ENCODE measurements at regions of chr1 and their contacts with region 1.

Region 1: DNA sequence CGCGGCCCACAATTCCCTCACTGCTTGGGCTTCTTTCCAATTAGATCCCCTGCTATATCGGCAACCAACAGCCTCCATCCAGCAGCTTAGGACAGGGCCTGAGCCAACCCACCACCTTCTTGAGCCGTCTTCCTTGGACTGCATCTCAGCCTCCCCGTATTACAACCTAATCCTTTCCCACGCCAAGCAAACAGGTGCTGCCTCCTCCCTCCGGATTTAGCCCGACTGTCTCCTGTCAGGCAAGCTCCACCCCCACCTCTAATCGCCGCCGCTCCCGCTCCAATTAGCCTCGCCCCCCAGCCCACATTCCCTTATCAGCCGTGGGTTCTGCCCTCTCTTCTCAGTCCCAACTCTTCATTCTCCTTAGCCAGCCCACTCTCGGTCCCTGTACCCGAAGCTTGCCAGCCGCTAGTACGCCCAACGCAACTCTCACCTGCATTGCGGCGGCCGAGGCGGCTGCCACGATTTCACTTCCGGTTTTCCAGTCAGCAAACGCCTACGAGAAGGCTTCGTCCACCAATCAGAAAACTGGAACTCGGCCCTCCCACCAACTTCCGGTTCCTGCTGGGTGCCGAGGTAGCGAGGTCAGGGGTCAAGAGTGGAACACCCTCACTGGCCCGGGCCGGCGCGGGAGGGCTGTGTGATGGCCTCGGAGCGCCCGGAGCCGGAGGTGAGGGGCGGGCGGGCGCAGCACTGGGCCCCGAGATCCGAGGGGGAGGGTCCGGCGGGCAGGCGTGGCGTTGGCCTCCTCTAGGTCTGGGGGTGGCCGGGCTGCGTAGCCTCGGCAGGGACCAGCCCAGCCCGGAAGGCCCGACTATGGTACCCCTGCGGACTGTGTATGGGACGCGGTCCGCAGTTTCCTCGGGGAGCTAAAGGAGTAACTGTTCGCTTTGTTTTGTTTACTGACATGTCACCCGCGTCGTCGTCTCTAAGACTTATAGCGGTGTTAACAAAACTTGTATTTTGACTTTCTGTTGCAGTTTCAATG is at the starts of genes MED8 and SZT2:
- H3K4me3 ChIP-seq: peak within 1 kb of the TSS; percentile 61
- H3K27ac ChIP-seq: peak within 1 kb of the TSS; percentile 67
- H3K4me1 ChIP-seq: no peaks in the 10 kb centered on the region
- CTCF ChIP-seq: no peak

Region 2: DNA sequence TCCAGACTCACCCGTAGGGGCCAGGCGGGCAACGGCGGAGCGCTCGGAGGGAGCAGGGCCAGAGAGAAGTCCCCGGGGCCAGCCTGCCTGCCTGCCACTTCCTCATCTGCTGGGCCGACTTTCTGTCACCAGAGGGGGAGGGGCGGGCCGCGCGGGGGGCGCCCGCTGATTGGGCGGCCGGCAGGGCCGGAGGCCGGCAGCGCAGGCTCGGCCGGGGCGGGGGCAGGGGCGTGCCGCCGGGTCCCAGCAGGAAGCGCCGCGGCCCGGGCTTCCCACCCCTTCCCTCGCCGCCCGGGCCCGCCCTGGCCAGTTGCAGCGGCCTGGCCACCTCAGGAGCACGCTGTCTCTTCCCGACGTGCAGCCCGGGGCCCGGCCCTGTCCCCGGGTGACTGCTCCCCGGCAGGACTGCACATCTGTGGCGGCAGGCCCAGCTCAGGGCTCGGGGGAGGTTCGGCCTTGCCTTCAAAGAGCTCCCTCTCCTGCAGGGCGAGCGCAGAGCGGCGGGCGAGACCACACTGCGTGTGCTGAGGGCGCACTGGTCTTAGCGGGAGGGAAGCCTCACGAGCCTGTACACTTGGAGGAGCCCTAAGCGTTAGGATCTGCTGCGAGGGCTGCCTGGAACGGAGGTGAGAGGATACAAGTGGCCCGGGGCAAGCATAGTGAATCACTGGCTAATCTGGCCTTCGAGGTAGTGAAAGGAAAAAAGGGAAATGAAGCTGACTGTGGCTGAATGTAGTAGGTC is 21.5 kb before region 1 on chr1 and contains the start of gene ELOVL1:
- CTCF ChIA-PET with region 1: interaction called, 3 read pairs
- POLR2A ChIA-PET with region 1: interaction called, 20 read pairs
- H3K4me3 ChIP-seq: peak within 1 kb of the TSS; percentile 53
- H3K27ac ChIP-seq: peak within 1 kb of the TSS; percentile 92
- H3K4me1 ChIP-seq: peaks cover 8% of the 10 kb centered on the region; the same call in 1 of the 2 replicates
- CTCF ChIP-seq: peak; percentile 94

Region 3: GRCh38 chr1:43499886-43500285 is 110.3 kb after region 1 on chr1:
- CTCF ChIA-PET with region 1: no interaction called
- POLR2A ChIA-PET with region 1: no interaction called
- H3K4me3 ChIP-seq: no peak overlapping the region
- H3K27ac ChIP-seq: no peak overlapping the region
- H3K4me1 ChIP-seq: no peaks in the 10 kb centered on the region
- CTCF ChIP-seq: no peak